Astrocyte of the cerebellum (primary cell): ENCODE measurements at regions of chr18 and their contacts with region 1.

Region 1: GRCh38 chr18:40868110-40868858 is 1086.8 kb upstream of the PIK3C3 start:
- DNase-seq: no peak
- H3K4me3 ChIP-seq: no peak overlapping the region
- CTCF ChIP-seq: no peak

Region 2: DNA sequence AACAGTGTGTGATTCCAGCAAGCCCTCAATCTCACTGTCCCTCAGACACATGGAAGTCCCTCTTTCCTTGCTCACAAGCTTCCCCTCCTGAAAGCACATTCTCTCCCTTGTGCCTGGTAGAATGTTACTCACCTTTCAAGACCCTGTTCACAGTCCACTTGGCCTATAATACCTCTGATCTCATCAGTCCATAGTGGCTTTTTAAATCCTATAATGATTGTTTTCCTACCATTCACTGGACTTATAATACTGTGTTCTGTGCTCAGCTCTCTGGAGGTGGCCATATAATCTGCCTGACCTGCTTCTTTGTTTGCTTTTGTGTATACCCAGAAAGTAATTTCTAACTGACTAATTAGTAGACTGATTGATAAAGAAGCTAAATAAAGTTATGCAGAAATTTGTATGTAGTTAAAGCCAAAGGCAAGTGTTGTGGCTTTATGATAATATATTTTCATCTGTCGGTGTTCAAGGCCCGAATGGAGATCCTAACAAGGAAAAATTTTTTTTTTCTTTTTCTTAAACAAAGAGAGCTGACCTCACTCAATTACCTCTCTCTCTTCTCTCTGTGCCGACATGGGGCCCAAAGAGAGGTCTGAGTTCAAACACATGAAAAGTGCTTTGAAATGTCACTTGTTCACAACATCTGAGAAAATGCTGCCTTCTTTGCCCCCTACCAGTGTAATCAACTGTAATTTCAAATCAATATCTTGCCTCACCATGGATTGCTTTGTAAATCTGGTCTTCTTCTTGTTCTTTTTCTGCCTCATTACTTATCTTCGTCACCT is 53.8 kb after region 1 on chr18:
- in situ Hi-C with region 1: loop called (anchors 5 kb)
- DNase-seq: no peak
- H3K4me3 ChIP-seq: no peak overlapping the region
- CTCF ChIP-seq: no peak